ENCODE measurements at regions of chr6 and their contacts with region 1.

Region 1: DNA sequence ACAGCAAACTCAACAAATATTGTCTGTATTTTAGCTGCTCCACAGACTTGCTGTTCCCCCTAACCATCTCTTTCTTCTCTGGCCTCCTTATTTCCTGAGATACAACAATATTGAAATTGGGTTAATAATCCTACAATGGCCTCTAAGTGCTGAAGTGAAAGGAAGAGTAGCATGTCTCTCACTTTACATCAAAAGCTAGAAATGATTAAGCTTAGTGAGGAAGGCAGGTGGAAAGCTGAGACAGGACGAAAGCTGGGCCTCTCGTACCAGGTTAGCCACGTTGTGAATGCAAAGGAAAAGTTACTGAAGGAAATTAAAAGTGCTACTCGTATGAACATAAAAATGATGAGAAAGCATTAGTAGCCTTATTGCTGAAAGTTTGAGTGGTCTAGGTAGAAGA is 63.8 kb downstream of the ELOVL5 start:
- DNase-seq: no peak
- H3K4me3 Mint-ChIP-seq: no peak overlapping the region
- H3K27ac Mint-ChIP-seq: peak overlapping the region; percentile 31
- H3K4me1 Mint-ChIP-seq: peaks cover 30% of the 10 kb centered on the region
- H3K27me3 Mint-ChIP-seq: no peaks in the 10 kb centered on the region

Region 2: GRCh38 chr6:53300656-53301551 is 16.0 kb after region 1 on chr6:
- intact Hi-C with region 1: loop called (anchors 2 kb)
- DNase-seq: no peak
- H3K4me3 Mint-ChIP-seq: peak overlapping the region; percentile 16
- H3K27ac Mint-ChIP-seq: peak overlapping the region; percentile 47
- H3K4me1 Mint-ChIP-seq: peaks cover 69% of the 10 kb centered on the region
- H3K27me3 Mint-ChIP-seq: no peaks in the 10 kb centered on the region

Measured in activated T-helper 1 cell treated with anti-CD3 and anti-CD28 coated beads, Interleukin-12 subunit alpha, Interleukin-12 subunit beta, Interleukin-2, Interleukin-4 antibody, amounts not matched to agents 30 ng/mL and 10 ng/mL and 1 ng/mL, durations not matched to agents 14 hours and 24 hours and 36 hours (primary cell).